Activated CD4-positive, alpha-beta T cell treated with anti-CD3 and anti-CD28 coated beads, Interleukin-2, amount 10 ng/mL, durations not matched to agents 24 days and 14 days (primary cell): ENCODE measurements at regions of chr18 and their contacts with region 1.

Region 1: DNA sequence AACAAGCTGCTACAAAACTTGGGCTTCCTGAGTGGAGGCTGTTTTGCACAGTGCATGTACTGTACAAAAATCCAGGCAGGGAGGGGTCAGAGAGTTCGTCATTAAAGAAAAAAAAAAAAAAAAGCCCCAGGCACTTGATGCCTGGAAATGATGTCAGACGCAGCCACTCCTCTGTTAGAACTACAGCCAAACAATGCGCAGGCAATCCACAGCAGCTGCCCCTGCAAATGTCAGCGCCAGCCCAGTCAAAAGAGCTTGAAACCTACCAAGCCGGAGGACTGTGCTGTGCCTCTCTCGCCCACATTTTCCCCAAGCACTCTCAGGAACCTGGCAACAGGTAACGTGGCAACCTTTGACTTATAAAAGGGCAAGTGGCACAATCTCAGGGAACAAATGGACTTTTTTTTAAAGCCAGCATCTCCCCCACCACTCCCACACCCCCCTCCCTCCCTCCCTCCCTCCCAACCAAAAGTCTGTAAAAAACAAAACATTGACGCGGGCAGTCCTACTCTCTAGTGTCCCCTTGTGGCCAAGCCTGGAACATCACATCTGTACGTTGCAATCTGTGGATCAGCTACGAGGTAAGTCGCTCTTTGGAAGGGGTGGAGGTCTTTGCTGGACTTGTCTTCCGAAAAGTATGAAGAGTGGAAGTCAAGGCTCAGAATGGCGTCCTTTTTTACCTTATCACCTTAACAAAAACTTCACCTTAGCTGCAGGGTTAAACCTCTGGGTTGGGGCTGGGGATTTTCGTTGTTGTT is 144.1 kb downstream of the TGIF1 start:
- DNase-seq: peak; percentile 96
- H3K4me3 Mint-ChIP-seq: peak overlapping the region; percentile 89
- H3K27ac Mint-ChIP-seq: peak overlapping the region; percentile 97
- H3K4me1 Mint-ChIP-seq: peaks cover 39% of the 10 kb centered on the region
- H3K27me3 Mint-ChIP-seq: no peaks in the 10 kb centered on the region

Region 2: GRCh38 chr18:3261371-3262246 is 332.5 kb before region 1 on chr18 and contains the start of gene MYL12B:
- intact Hi-C with region 1: loop called (anchors 1 kb)
- DNase-seq: peak; percentile 94
- H3K4me3 Mint-ChIP-seq: peak within 1 kb of the TSS; percentile 89
- H3K27ac Mint-ChIP-seq: peak within 1 kb of the TSS; percentile 98
- H3K4me1 Mint-ChIP-seq: peaks cover 68% of the 10 kb centered on the region
- H3K27me3 Mint-ChIP-seq: no peaks in the 10 kb centered on the region
- total RNA-seq, gene MYL12B: 239 and 245 TPM in 2 replicates

Region 3: DNA sequence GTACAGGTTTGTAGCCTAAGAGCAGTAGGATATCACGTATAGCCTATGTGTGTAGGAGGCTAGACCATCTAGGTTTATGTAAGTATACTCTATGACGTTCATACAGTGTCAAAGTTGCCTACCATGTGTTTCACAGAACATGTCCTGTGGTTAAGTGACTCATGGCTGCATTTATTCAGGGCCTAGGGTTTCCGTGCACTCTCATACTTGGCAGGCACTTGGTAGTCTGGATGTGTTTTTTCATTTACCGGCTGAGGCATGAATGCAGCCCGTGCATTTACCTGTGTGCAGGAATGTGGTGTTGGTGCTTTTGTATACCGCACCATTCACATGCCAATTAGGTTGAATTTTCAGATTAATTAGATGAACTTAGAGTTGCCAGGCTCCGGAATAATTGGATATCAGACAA is 288.7 kb before region 1 on chr18:
- intact Hi-C with region 1: loop called (anchors 2 kb)
- DNase-seq: peak; percentile 85
- H3K4me3 Mint-ChIP-seq: peak overlapping the region; percentile 60
- H3K27ac Mint-ChIP-seq: peak overlapping the region; percentile 92
- H3K4me1 Mint-ChIP-seq: peaks cover 19% of the 10 kb centered on the region
- H3K27me3 Mint-ChIP-seq: peaks cover 22% of the 10 kb centered on the region

Region 4: DNA sequence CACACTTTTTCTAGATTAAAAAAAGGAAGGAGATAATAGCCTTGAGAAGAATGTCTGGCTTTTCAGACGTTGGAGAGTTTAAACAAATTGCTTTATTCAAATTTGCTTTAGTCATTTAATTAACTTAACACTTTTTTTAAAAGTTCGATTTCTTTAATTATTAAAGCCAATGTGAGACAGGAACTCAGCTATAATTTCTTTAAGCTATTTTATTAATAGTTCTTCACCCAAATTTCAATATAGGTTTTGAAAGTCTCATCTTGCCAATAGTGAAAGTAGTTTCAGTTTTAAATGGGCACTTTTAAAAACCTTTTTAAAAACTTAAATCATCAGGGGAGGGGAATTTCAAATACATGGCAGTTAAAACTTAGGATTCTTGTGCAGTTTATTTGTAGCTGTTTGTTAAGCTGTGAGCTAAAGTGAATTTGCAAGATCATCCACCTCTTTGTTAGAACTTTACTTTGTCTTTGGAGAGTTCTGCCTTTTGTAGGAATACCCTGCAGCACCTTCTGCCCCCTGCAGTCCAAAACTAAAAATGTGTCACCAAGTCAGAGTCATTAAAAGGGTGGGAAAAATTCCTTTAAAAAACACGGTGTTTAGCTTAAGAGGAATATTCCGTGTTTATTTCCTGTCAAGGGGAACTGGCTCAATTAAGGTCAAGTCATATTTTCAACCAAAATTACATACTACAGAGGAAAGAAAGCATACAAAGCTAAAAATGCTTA is 139.6 kb before region 1 on chr18:
- intact Hi-C with region 1: loop called (anchors 1 kb)
- DNase-seq: peak; percentile 84
- H3K4me3 Mint-ChIP-seq: peak overlapping the region; percentile 96
- H3K27ac Mint-ChIP-seq: peak overlapping the region; percentile 100
- H3K4me1 Mint-ChIP-seq: peaks cover 66% of the 10 kb centered on the region
- H3K27me3 Mint-ChIP-seq: no peaks in the 10 kb centered on the region

Region 5: DNA sequence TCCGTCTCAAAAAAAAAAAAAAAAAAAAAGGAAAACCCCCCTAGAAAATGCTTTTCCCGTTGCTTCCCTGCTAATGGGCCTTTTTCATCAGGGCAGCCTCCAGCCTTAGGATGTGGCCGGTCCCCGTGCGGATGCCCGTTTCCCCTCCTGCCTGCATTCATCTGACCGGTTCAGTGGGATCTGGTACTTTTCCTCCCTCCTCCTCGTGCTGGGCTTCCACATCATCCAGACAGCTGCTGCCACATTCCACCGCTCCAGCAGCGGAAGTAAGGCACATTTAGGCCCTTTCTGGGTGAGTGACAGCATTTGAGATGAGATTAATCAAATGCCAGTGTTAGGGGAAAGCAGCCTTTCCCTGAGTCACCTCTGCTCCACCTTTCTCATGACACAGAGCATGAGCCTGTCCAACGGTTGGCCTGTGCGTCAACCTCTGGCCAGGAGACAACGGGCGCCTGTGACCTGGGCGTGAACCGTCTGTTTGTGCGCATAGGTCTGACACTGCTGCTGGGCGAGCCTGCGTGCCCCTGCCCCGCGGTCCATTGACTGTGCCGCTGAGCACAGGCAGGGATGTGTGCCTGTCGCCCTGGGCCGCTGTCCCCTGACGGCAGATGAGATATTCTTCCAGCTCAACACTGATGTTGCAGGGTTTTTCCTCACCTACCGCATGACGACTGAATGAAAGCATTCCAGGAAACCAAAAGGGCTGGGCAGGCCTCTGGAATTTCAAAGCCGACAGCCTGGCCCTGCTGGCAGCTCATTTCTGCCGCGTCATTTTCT is 29.9 kb after region 1 on chr18:
- intact Hi-C with region 1: loop called (anchors 1 kb)
- DNase-seq: peak; percentile 66
- H3K4me3 Mint-ChIP-seq: peak overlapping the region; percentile 72
- H3K27ac Mint-ChIP-seq: peak overlapping the region; percentile 91
- H3K4me1 Mint-ChIP-seq: peaks cover 37% of the 10 kb centered on the region
- H3K27me3 Mint-ChIP-seq: no peaks in the 10 kb centered on the region

Region 6: DNA sequence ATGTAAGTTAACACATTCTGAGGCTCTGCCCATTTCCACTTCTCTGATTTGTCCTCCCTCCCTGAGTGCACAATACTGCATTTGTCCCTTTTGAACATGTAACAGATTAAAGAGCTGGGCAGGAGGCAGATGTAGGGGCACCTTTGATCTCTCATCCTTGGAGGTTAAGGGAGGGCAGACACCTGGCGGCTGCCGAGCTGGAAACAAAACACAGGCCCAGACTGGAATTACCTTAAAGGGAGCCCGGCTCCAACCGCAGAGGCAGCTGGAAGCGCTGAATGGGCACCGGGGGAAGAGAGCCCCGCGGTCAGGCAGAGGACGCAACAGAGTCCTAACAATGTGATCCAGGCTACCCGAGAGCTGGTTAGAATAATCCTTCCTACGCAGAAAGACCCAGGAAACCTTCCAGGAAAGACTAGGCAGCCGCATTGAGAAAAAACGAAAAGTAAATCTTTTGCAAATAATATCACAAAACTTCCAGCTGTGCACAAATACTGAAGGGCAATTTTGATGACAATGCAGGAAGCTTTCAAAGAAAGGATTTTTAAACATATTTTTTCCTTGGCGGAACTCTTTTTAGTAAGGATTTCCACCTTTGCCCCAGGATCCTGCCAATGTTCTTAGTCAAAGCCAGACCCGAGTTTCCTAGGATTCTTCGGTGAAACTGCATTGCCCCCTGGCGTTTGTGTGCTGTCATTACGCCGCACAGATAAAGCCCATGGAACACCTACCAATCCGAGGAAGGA is 71.9 kb after region 1 on chr18:
- intact Hi-C with region 1: loop called (anchors 1 kb)
- DNase-seq: peak; percentile 92
- H3K4me3 Mint-ChIP-seq: peak overlapping the region; percentile 61
- H3K27ac Mint-ChIP-seq: peak overlapping the region; percentile 53
- H3K4me1 Mint-ChIP-seq: peaks cover 33% of the 10 kb centered on the region
- H3K27me3 Mint-ChIP-seq: peaks cover 9% of the 10 kb centered on the region